PC-9 (cell line): ENCODE measurements at regions of chr6 and their contacts with region 1.

Region 1: DNA sequence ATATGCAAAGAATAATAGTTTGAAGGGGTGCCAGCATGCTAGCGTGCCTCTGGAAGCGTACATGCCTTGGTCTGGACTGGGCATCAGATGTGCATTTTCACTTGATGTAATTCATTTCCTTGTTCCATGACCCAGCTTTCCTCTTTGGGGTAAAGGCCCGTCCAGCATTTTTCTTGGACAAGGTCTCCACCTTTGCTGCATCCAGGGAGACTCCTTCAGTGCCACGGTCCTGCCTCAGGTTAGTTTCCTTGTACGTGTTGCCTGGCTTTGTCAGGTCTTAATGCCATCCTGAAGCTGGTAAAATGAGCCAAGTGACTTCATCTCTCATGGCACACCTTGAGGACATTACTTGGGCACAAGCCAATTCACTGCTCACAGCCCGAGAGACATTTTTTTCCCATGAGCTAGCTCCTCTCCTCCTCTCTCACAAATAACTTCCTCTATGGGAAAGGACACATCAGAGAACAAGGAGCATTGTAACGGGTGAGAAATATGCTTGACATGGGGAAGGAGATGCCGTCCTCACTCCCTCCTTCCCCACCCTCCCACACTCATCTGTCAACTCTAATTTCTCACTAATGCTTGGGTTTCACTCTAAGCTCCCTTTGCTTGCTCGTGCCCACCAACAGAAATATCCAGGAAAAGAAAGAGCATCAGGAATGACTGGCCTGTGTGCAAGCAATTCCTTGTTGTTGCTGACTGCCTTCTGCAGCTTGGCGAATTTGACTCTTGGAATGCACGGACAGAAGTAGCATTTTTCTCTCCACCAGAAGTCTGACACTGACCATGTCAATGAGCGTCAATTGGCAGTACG is 24.0 kb downstream of the EDN1 start:
- DNase-seq: peak; percentile 87 to 100
- H3K4me3 ChIP-seq: peak overlapping the region; percentile 30; the same call in 1 of the 2 replicates
- H3K27ac ChIP-seq: peak overlapping the region; percentile 88
- H3K4me1 ChIP-seq: peaks cover 27% of the 10 kb centered on the region
- H3K27me3 ChIP-seq: no peaks in the 10 kb centered on the region
- CTCF ChIP-seq: no peak

Region 2: GRCh38 chr6:12296255-12296573 is 18.0 kb before region 1 on chr6:
- CTCF ChIA-PET with region 1: interaction called, 6 read pairs
- POLR2A ChIA-PET with region 1: interaction called, 87 read pairs
- intact Hi-C with region 1: loop called (anchors 1 kb)
- DNase-seq: peak in 1 of 2 experiments; percentile 60
- H3K4me3 ChIP-seq: no peak overlapping the region
- H3K27ac ChIP-seq: no peak overlapping the region
- H3K4me1 ChIP-seq: peaks cover 29% of the 10 kb centered on the region
- H3K27me3 ChIP-seq: no peaks in the 10 kb centered on the region
- CTCF ChIP-seq: no peak

Region 3: DNA sequence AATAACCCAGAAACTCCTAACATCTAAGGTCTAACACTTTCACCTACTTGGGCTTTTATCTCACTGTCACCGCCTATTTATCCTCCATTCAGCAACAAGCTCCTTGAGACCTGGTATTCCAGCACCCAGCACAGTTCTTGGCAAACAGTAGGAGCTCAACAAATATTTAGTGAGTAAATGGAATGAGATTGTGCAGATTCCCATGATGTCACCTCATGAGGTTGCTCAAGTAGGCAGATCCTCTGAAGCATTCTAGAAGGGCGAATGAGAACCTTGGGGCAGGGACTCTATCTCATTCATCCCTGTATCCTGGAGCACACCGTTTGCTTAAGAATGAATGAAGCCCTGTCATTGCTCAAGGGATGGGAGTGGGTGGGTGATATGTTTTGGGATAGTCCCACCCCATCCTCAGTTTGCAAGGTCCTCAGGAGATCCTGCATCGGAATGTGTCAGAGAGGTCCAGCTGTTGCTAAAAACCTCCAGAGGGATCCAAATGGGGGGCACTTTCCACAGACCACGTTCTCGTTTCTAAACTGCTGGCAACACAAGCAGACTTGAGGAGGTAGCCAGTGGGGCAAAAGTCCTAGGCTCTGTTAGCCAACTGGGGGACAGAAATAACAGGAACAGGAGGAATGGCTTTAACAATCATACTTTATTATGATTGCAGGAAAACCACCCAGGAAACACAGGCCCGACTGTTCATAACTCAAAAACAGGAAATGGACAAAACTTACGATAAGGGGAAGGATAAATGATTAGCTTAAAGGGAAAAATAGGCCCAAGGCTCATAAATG is 18.0 kb after region 1 on chr6:
- CTCF ChIA-PET with region 1: interaction called, 3 read pairs
- POLR2A ChIA-PET with region 1: interaction called, 13 read pairs
- intact Hi-C with region 1: no loop called
- DNase-seq: peak in 1 of 2 experiments; percentile 94
- H3K4me3 ChIP-seq: no peak overlapping the region
- H3K27ac ChIP-seq: peak overlapping the region; percentile 34
- H3K4me1 ChIP-seq: peaks cover 56% of the 10 kb centered on the region
- H3K27me3 ChIP-seq: no peaks in the 10 kb centered on the region
- CTCF ChIP-seq: no peak

Region 4: DNA sequence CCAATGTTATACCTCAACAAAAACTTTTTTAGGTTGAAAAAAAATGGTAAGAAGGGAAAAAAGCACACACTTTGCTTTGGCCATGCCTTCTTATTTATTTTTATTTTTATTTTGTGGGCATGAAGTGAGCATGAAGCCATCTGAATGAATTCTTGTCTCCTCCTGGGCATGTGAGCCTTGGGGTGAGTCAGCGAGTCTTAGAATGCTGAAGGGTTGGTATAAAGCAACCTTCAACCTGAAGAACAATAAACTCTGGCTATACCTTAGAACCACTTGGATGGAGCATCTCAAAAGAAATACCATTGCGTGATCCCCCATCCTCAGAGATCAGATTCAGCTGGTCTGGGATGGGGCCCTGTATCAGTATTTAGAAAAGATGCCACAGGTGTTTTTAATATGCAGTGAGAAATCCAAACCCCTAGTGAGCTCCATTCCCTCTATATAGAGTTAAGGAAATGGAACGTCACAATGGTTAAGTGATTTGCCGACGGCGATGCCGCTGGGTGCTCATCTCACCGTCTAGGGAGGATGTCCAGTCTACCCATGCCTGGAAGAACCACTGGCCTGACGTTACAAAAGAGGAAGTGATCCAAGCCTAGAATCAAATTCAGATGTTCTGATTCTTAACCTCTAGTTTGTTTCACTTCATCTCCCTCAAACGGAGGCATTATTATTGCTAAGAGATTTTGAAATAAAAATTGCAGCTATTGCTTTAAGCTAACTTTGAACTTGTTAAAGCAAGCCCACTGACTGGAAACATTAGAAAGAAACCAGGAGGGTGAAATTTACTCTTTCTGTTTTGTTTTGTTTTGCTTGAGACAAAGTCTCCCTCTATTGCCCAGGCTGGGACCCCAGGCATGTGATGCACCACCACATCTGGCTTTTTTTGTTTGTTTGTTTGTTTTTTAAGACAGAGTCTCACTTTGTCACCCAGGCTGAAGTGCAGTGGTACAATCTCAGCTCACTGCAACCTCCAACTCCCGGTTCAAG is 43.1 kb after region 1 on chr6:
- CTCF ChIA-PET with region 1: no interaction called
- POLR2A ChIA-PET with region 1: no interaction called
- intact Hi-C with region 1: no loop called
- DNase-seq: no peak
- H3K4me3 ChIP-seq: no peak overlapping the region
- H3K27ac ChIP-seq: no peak overlapping the region
- H3K4me1 ChIP-seq: no peaks in the 10 kb centered on the region
- H3K27me3 ChIP-seq: no peaks in the 10 kb centered on the region
- CTCF ChIP-seq: no peak

Region 5: DNA sequence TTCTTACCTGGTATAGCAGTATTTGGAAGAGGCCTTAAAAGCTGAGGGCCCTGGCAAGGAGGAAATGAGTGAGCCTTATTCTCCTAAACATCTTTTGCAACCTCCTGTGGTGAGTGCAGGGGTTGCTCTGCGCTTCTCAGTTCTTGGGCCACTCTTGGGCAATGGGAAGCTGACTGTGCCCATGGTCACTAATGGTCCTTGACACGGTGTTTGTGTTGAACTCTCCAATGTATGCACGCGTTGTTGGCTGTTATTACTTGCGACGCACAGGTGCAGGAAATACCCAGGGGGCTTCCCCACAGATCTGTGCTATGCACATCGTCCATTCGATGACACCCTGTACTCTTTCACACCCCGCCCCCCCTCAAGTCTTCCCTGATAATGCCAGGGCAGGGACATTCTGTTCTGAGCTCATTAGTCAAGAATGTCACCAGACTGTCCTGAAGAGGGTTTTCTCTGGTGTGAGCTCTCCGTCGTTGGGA is 55.6 kb after region 1 on chr6:
- CTCF ChIA-PET with region 1: no interaction called
- POLR2A ChIA-PET with region 1: interaction called, 12 read pairs
- intact Hi-C with region 1: no loop called
- DNase-seq: peak; percentile 27 to 75
- H3K4me3 ChIP-seq: no peak overlapping the region
- H3K27ac ChIP-seq: no peak overlapping the region
- H3K4me1 ChIP-seq: peaks cover 16% of the 10 kb centered on the region
- H3K27me3 ChIP-seq: no peaks in the 10 kb centered on the region
- CTCF ChIP-seq: 0 out of 2 replicates have a peak, but pooled peaks have one; percentile 21

Region 6: GRCh38 chr6:12490904-12491571 is 176.8 kb after region 1 on chr6:
- CTCF ChIA-PET with region 1: no interaction called
- POLR2A ChIA-PET with region 1: no interaction called
- intact Hi-C with region 1: loop called (anchors 1 kb)
- DNase-seq: peak; percentile 12 to 68
- H3K4me3 ChIP-seq: no peak overlapping the region
- H3K27ac ChIP-seq: peak overlapping the region; percentile 87
- H3K4me1 ChIP-seq: peaks cover 29% of the 10 kb centered on the region
- H3K27me3 ChIP-seq: no peaks in the 10 kb centered on the region
- CTCF ChIP-seq: no peak

Region 7: DNA sequence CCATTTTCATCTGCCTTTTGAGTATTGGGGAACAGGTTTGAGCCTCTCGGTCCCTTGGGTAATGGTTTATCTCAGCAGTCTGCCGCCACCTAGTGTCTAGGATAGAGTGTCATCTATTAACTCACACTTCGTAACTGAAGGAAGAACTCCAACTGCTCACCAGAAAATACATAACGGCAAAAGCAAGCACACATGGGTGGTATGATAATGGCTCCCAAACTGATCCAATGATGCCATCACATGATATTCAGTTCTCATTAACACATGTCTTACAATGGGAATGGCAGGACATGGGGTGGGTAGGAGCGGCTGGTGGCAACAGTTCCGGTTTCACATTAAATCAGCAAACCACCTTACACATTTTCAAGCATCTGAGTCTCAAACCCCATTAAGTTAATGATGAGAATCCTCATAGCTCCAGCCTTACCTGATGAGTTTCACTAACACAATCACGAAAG is 291.7 kb after region 1 on chr6:
- CTCF ChIA-PET with region 1: interaction called, 3 read pairs
- POLR2A ChIA-PET with region 1: interaction called, 3 read pairs
- intact Hi-C with region 1: loop called (anchors 1 kb)
- DNase-seq: peak; percentile 53 to 79
- H3K4me3 ChIP-seq: no peak overlapping the region
- H3K27ac ChIP-seq: no peak overlapping the region
- H3K4me1 ChIP-seq: peaks cover 16% of the 10 kb centered on the region
- H3K27me3 ChIP-seq: no peaks in the 10 kb centered on the region
- CTCF ChIP-seq: peak; percentile 98